Motor neuron (in vitro differentiated cells): ENCODE measurements at regions of chr2 and their contacts with region 1.

Region 1: DNA sequence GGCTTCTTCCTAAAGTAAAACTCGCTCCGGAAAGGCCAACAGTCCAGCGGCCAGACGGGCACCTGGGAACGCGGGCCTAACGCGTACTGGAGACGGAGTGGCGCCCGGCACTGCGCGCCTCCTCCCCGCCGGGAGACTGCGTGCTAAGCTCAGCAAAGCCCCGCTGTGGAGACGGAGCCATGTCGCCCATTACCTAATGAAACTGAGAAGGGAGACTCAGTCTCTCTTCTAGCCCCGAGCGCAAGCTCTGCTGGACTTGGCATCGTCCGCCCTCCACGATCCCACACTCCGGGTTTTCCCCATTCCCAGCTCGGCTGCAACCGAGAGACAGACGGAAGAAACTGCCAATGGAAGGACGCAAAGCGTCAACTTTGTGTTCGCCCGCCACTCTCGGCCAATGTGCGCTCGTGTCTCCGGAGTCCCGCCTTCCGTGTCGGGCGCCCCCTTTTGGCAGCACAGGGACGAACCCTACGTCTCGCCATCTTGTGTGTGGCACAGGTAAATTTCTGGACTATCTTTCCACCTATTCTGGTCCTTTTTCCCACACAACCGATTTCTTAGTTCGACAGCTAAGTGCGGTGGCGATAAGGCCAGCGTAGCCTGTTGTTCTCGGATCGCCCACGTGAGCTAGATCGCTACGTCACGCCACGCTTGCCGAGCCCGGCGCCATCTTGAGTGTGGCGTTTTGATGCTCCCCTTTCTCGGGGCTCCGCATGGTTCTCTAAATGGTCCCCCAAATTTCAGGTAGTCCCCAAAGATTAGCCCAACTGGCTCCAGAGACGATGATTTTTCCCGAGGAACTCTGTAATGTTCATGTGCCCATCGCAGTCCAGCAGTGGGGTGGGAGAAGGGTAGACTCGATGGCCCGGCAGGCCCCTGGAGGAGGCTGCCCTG is 1.3 kb upstream of the PTMA start:
- ATAC-seq: peak; percentile 33 to 59 (median 46)
- H3K4me3 ChIP-seq: peak overlapping the region; percentile 47 to 88 (median 53)
- H3K27ac ChIP-seq: peak overlapping the region; percentile 98 to 100
- H3K4me1 ChIP-seq: peaks cover 5 to 12% of the 10 kb centered on the region in 2 donors

Region 2: GRCh38 chr2:231364961-231365810 is 341.8 kb before region 1 on chr2:
- in situ Hi-C with region 1: no loop called
- ATAC-seq: peak; percentile 90 to 97 (median 94)
- H3K4me3 ChIP-seq: no peak overlapping the region
- H3K27ac ChIP-seq: peak overlapping the region; percentile 22 to 26
- H3K4me1 ChIP-seq: peaks cover 14 to 17% of the 10 kb centered on the region in 2 donors

Region 3: GRCh38 chr2:231514103-231514950 is 192.7 kb before region 1 on chr2:
- in situ Hi-C with region 1: loop called in 1 of 9 experiments (anchors 25 kb)
- ATAC-seq: peak; percentile 93 to 99 (median 96)
- H3K4me3 ChIP-seq: peak overlapping the region; percentile 46 to 89 (median 69)
- H3K27ac ChIP-seq: peak overlapping the region; percentile 83 to 92
- H3K4me1 ChIP-seq: peaks cover 19 to 24% of the 10 kb centered on the region in 2 donors

Region 4: GRCh38 chr2:231612179-231613053 is 94.6 kb before region 1 on chr2:
- in situ Hi-C with region 1: loop called in 1 of 9 experiments (anchors 25 kb)
- ATAC-seq: peak in 5 of 8 experiments; percentile 5 to 63 (median 39)
- H3K4me3 ChIP-seq: no peak overlapping the region
- H3K27ac ChIP-seq: peak overlapping the region; percentile 88 to 97
- H3K4me1 ChIP-seq: peaks cover 28 to 33% of the 10 kb centered on the region in 2 donors